OCI-LY7 (cell line): ENCODE measurements at regions of chr2 and their contacts with region 1.

Region 1: DNA sequence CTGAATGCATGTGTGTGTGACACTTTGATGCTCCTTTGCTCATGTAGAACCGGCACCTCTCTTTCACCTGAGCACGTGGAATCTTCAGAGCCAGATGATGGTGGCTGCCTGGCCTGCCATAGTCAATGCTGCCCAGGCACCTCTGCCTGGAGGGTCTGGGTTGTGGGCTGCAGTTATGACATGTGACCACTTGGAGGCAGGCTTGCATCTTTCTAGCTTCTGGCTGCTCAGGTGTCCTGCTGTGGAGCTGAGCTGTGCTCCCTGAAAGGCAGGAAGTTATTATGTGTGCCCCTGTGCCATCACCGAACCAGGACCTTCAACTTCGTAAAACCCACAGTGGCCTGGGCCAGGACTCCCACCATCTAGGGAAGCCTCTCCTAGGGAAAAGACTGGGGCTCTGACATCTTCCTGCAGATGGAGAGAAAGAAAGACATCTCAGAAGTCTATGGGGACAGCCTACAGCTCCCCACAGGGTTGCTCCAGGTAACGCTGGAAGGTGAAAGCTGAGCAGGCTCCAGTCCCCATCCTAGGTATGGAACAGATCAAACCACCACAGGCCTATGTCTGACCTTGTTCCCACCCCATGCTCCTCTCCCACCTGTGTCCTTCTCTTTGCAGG is 30.2 kb downstream of the PSD4 start:
- DNase-seq: peak; percentile 82
- H3K4me3 ChIP-seq: no peak overlapping the region
- H3K27ac ChIP-seq: no peak overlapping the region
- H3K4me1 ChIP-seq: peaks cover 15% of the 10 kb centered on the region
- CTCF ChIP-seq: peak; percentile 88

Region 2: GRCh38 chr2:112869258-112869885 is 334.6 kb before region 1 on chr2:
- CTCF ChIA-PET with region 1: no interaction called
- POLR2A ChIA-PET with region 1: no interaction called
- intact Hi-C with region 1: no loop called
- DNase-seq: no peak
- H3K4me3 ChIP-seq: no peak overlapping the region
- H3K27ac ChIP-seq: no peak overlapping the region
- H3K4me1 ChIP-seq: no peaks in the 10 kb centered on the region
- CTCF ChIP-seq: no peak

Region 3: DNA sequence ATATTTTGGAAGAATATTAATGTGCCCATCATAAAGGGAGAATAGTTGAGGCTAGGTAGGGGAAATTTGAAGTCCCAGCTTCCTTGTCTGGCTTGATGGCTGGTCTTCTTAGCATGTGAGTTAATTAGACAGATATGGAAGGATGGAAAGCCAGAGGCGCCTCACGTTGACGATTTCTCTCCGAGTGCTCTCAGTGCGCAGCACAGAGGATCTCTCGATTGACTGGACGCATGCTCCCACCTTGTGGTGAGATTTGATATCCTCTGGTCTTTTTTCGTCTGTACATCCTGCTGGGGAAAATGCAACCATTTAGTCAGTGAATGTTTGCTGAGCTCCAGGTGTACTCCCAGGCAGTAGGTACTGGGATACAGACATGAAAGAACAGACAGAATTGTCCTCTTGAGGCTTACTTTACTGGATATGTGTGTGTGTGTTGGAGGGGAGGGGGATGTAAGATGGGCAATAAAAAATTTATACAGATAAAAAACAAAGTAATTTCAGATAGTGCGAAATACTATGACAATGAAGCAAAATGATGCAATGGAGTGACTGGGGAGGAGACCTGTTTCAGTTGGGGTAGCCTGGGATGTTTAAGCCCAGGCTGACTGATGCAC is 166.6 kb after region 1 on chr2:
- CTCF ChIA-PET with region 1: no interaction called
- POLR2A ChIA-PET with region 1: no interaction called
- intact Hi-C with region 1: loop called (anchors 5 kb)
- DNase-seq: peak; percentile 59
- H3K4me3 ChIP-seq: no peak overlapping the region
- H3K27ac ChIP-seq: no peak overlapping the region
- H3K4me1 ChIP-seq: no peaks in the 10 kb centered on the region
- CTCF ChIP-seq: peak; percentile 75

Region 4: DNA sequence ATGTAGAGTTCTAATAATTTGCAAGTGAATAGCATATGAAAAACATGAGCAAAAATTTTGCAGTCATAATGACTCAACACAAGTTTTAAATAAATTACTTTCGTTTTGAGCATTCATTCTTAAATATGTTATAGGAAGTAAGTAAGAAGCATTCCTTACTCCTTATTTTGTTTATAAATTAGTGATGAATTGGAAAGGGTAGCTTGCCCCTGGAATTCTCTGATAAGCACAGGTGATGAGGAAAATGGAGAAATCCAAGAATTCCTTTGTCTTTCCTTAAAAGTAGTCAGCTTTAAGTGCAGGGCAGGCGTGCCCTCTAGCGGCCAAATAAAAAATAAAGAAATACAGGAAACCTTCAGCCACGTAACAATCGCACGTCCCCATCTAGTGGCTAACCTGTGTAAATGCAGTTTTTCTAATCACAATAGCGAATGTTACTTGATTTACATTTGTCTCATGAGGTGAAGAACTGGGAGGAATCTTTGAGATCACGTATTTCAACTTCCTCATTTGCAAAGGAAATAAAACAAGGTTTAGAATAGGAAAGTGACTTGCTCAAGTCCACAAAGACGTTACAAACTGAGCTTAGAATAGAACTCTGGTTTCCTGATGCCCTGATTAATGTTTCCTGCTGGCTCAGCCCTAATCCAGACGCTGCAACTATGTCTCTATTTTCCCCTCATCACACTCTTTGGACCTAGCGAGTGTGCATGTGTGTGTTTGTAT is 186.3 kb after region 1 on chr2:
- CTCF ChIA-PET with region 1: no interaction called
- POLR2A ChIA-PET with region 1: interaction called, 3 read pairs
- intact Hi-C with region 1: loop called (anchors 2 kb)
- DNase-seq: peak; percentile 87
- H3K4me3 ChIP-seq: peak overlapping the region; percentile 4
- H3K27ac ChIP-seq: peak overlapping the region; percentile 38
- H3K4me1 ChIP-seq: peaks cover 4% of the 10 kb centered on the region
- CTCF ChIP-seq: peak; percentile 99